Activated B cell treated with CpG ODN at 0.5 μM for 24 hours (primary cell): ENCODE measurements at regions of chr2 and their contacts with region 1.

Region 1: GRCh38 chr2:219218732-219219701 is at the start of gene ABCB6:
- DNase-seq: peak; percentile 82
- ATAC-seq: peak; percentile 95
- H3K4me3 Mint-ChIP-seq: peak within 1 kb of the TSS; percentile 81
- H3K27ac Mint-ChIP-seq: peak within 1 kb of the TSS; percentile 74
- H3K4me1 Mint-ChIP-seq: peaks cover 19% of the 10 kb centered on the region
- H3K27me3 Mint-ChIP-seq: no peaks in the 10 kb centered on the region
- CTCF ChIP-seq: no peak
- total RNA-seq, gene ABCB6: 12.1 and 16.6 TPM in 2 replicates

Region 2: DNA sequence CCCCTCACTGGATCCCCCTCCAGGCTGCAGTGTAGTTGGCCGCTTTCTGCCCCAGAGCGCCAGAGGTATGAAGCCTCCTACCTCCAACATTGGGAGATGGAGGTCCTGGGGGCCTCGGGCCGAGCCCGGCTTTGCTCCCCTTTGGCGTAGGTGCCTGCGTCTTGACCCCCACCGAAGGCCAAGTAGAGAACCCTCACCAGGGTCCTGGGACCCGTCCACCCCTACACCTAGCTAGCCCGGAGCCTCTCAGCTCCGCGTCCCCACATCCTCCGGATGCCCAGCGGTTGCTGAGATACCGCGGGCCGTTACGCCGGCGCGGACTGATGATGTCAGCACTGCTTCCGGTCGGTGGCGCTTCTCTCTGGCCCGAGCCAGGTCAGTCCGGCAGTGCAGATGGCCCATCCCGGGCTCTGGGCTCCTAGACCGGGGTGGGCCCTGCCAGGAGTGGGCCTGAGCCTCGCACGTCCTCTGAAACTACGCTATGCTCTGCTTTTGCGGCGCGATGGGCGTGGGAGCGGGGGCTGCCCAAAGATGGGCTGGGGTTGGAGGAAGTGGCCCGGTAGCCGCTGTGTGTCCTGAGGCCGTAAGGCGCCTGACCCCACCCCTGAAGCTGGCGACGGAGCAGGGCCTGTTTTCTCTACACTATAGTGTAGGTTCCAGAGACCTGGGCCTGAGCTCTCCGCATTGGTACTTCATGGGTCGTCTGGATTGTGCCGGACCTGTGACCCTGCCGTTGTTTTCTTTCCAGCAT is 26.3 kb after region 1 on chr2 and contains the starts of genes GLB1L and STK16:
- CTCF ChIA-PET with region 1: interaction called, 3 read pairs
- POLR2A ChIA-PET with region 1: interaction called, 30 read pairs
- intact Hi-C with region 1: loop called (anchors 1 kb)
- DNase-seq: peak; percentile 95
- ATAC-seq: peak; percentile 64
- H3K4me3 Mint-ChIP-seq: peak within 1 kb of the TSS; percentile 90
- H3K27ac Mint-ChIP-seq: peak within 1 kb of the TSS; percentile 98
- H3K4me1 Mint-ChIP-seq: peaks cover 57% of the 10 kb centered on the region
- H3K27me3 Mint-ChIP-seq: no peaks in the 10 kb centered on the region
- CTCF ChIP-seq: no peak
- total RNA-seq, gene GLB1L: 4.5 and 4.6 TPM in 2 replicates
- total RNA-seq, gene STK16: 31.0 and 36.5 TPM in 2 replicates

Region 3: DNA sequence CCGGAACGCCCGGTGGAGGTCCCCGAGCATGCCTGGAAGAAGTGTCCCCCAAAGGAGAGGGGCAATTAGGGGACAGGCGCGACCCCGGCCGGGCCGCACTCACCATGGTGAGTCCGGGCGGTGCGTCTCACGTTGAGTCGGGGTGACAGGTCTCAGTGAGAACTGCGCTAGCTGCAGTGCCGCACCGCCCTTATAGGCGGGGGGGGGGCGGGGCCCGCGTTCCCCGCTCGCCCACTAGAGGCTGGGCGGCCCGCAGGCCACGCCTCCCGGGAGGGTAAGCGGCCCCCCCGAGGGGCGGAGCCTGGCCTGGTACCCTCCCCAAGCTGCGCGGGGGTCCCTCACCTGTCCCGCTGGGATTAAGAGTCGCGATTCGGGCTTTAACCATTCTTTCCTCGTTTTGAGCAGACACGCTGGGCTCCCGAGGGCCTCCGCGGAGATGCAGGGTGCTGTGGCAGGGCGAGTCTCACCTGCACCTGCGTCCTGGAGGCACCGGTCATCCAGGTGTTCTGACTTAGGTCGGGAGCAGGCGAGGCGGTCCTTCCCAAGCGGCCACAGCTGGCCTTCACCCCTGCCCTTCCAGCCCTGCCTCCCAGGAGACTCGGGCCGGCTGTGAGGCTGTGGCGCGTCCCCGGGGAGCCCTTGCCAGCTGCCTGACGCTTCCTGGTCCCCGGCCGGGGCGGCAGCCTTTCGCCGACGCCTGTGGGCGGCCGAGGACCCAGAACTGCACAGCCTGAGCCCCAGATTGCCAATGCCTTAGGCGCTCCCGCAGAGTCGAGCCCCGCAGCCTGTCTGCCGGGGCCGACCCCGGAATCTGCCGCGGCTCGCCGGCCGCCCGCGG is 35.0 kb after region 1 on chr2 and contains the start of gene TUBA4A:
- CTCF ChIA-PET with region 1: interaction called, 5 read pairs
- POLR2A ChIA-PET with region 1: interaction called, 61 read pairs
- intact Hi-C with region 1: loop called (anchors 1 kb)
- DNase-seq: peak; percentile 90
- ATAC-seq: peak; percentile 69
- H3K4me3 Mint-ChIP-seq: peak within 1 kb of the TSS; percentile 82
- H3K27ac Mint-ChIP-seq: peak within 1 kb of the TSS; percentile 98
- H3K4me1 Mint-ChIP-seq: peaks cover 53% of the 10 kb centered on the region
- H3K27me3 Mint-ChIP-seq: no peaks in the 10 kb centered on the region
- CTCF ChIP-seq: no peak
- total RNA-seq, gene TUBA4A: 184 and 192 TPM in 2 replicates